ENCODE measurements at regions of chr5 and their contacts with region 1.

Region 1: GRCh38 chr5:56909294-56910209 is at the start of gene SETD9:
- DNase-seq: peak; percentile 99
- H3K4me3 ChIP-seq: peak within 1 kb of the TSS; percentile 67 to 77 (median 73)
- H3K27ac ChIP-seq: peak within 1 kb of the TSS; percentile 88 to 96 (median 94)
- H3K4me1 ChIP-seq: peaks cover 7 to 15% (median 11%) of the 10 kb centered on the region in 4 donors
- H3K27me3 ChIP-seq: no peaks in the 10 kb centered on the region
- CTCF ChIP-seq: no peak
- EP300 ChIP-seq: no peak
- POLR2A ChIP-seq: peak; percentile 29
- total RNA-seq, gene SETD9: 5.0 to 20.8 (median 12.2) TPM

Region 2: DNA sequence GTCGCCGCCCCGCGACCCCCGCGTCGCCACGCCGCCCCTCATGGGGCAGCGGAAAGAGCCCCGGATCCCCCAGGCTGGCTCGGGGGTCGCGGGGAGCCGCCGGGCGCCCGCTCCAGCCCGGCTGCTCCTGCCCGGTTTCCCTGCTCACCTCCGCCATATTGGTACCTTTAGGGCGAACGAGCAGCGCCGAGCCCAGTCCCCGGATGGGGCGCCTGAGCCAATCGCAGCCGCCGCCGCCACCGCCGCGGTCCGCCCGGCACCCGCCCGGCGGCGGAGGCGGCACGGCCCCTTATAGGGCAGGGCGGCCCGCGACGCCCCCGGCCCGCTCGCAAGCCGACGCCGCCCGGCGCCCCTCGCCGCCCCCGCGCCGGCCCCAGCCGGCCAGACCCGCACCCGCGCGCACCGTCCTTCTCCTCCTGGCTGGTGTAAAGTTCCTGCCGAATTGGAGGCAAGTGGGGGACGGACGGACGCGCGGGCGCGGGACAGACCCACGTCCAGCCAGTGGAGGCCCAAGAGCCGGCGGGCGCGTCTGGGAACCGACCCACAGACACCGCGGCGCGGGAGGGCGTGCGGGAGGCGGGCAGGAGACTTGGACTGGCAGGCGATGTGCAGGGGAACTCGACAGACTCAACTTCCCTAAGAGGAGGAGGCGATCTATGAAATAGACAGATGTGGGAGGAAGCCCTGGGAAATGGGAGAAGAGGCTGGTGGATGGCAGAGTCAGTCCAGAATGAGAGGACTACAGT is 42.6 kb after region 1 on chr5 and contains the start of gene MIER3:
- intact Hi-C with region 1: loop called (anchors 5 kb)
- DNase-seq: no peak
- H3K4me3 ChIP-seq: peak within 1 kb of the TSS; percentile 89 to 95 (median 92)
- H3K27ac ChIP-seq: peak within 1 kb of the TSS; percentile 83 to 93 (median 92)
- H3K4me1 ChIP-seq: peaks cover 18 to 27% (median 24%) of the 10 kb centered on the region in 4 donors
- H3K27me3 ChIP-seq: no peaks in the 10 kb centered on the region
- CTCF ChIP-seq: no peak
- EP300 ChIP-seq: no peak
- POLR2A ChIP-seq: no peak
- total RNA-seq, gene MIER3: 11.1 to 16.2 (median 13.0) TPM

Region 3: DNA sequence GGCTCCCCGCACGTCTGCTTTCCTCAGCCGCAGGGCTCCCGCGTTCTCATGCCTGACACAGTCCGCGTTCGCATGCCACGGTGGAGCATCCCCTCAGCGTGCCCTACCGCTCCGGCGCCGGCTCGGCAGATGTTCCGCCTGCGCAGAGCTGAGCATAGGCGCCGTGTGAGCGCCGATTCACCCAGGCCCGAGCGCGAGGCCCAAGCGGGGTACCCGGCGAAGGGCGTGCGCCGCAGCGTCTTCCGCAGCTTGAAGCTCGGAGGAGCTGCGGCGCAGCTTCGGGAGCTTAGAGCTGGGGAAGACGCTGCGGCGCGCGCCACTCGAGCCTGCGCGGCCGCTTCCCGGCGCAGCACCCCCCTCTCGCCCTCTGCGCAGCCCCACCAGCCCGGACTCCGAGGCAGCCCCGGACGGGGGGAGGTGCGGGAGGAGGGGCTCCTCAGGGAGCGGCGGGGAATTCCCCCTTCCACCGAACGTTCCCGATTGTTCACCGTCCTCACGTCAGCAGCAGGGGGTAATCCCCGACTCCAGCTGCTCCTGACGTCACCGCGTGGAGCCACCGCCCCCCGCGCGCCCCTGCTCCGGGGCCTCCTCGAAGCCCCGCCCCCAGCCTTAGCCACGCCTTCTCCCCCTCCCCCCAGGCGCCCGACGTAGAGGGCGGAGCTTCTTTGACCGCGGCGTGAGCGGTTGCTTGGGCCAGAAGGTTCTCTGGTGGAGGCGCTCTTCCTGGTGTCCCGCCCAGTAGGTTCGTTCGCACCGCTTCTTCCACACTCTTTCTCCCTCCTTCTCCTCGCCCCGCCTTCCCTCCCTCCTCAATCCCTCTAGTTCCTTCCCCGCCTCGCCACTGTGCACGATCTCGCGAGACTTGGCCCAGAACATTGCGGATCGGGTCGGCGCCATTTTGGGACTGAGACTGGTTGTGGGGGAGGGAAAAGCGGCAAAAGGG is 263.9 kb after region 1 on chr5 and contains the start of gene GPBP1:
- intact Hi-C with region 1: loop called (anchors 1 kb)
- DNase-seq: peak; percentile 99
- H3K4me3 ChIP-seq: peak within 1 kb of the TSS; percentile 82 to 99 (median 92)
- H3K27ac ChIP-seq: peak within 1 kb of the TSS; percentile 97 to 100 (median 98)
- H3K4me1 ChIP-seq: peaks cover 18 to 36% (median 34%) of the 10 kb centered on the region in 4 donors
- H3K27me3 ChIP-seq: no peaks in the 10 kb centered on the region
- CTCF ChIP-seq: no peak
- EP300 ChIP-seq: peak; percentile 65
- POLR2A ChIP-seq: peak; percentile 70
- total RNA-seq, gene GPBP1: 41.8 to 54.0 (median 48.6) TPM

Region 4: GRCh38 chr5:57834829-57835608 is 925.5 kb after region 1 on chr5:
- intact Hi-C with region 1: no loop called
- DNase-seq: no peak
- H3K4me3 ChIP-seq: no peak overlapping the region
- H3K27ac ChIP-seq: no peak overlapping the region
- H3K4me1 ChIP-seq: no peaks in the 10 kb centered on the region
- H3K27me3 ChIP-seq: no peaks in the 10 kb centered on the region
- CTCF ChIP-seq: no peak
- EP300 ChIP-seq: no peak
- POLR2A ChIP-seq: no peak

Measured in esophagus muscularis mucosa (tissue), 4 donors.